Transverse colon (tissue), 4 donors: ENCODE measurements at regions of chr7 and their contacts with region 1.

Region 1: DNA sequence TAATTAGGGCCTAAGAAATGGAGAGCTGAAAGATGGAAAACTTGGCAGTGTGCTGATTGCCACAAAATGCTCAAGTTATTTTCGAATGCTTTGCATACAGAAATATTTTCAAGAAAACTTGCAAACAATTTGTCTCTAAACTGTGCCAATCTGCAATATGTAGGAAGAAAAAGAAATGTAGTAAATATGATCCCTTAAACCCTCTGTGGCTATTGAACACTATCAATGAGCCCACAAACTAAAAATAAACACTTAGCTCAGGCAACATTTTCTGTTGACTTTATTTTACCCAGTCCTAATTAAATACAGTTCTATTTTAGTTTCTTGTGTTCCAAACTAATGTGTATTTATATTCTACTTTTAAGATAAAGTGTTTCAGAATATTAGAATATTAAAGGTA is 342.1 kb downstream of the SEMA3D start:
- DNase-seq: no peak
- H3K4me3 ChIP-seq: no peak overlapping the region
- H3K27ac ChIP-seq: no peak overlapping the region
- H3K4me1 ChIP-seq: no peaks in the 10 kb centered on the region
- H3K27me3 ChIP-seq: no peaks in the 10 kb centered on the region
- CTCF ChIP-seq: no peak
- EP300 ChIP-seq: no peak
- POLR2A ChIP-seq: no peak

Region 2: GRCh38 chr7:84855758-84856157 is 11.0 kb after region 1 on chr7:
- in situ Hi-C with region 1: no loop called
- intact Hi-C with region 1: loop called (anchors 1 kb)
- DNase-seq: no peak
- H3K4me3 ChIP-seq: no peak overlapping the region
- H3K27ac ChIP-seq: no peak overlapping the region
- H3K4me1 ChIP-seq: no peaks in the 10 kb centered on the region
- H3K27me3 ChIP-seq: no peaks in the 10 kb centered on the region
- CTCF ChIP-seq: no peak
- EP300 ChIP-seq: no peak
- POLR2A ChIP-seq: no peak